ENCODE measurements at regions of chr19 and their contacts with region 1.

Region 1: GRCh38 chr19:20999731-21000352 is 20.6 kb upstream of the ZNF430 start:
- DNase-seq: no peak
- ATAC-seq: peak; percentile 57
- H3K4me3 ChIP-seq: no peak overlapping the region
- H3K27ac ChIP-seq: no peak overlapping the region
- H3K4me1 ChIP-seq: no peaks in the 10 kb centered on the region
- H3K27me3 ChIP-seq: no peaks in the 10 kb centered on the region
- CTCF ChIP-seq: no peak
- EP300 ChIP-seq: no peak
- POLR2A ChIP-seq: no peak
- RAD21 ChIP-seq: no peak

Region 2: GRCh38 chr19:21698215-21698614 is 698.4 kb after region 1 on chr19:
- CTCF ChIA-PET with region 1: no interaction called
- POLR2A ChIA-PET with region 1: no interaction called
- in situ Hi-C with region 1: no loop called
- intact Hi-C with region 1: loop called (anchors 5 kb)
- DNase-seq: peak; percentile 4
- ATAC-seq: peak; percentile 39; the same call in 2 of the 3 replicates
- H3K4me3 ChIP-seq: no peak overlapping the region
- H3K27ac ChIP-seq: no peak overlapping the region
- H3K4me1 ChIP-seq: no peaks in the 10 kb centered on the region
- H3K27me3 ChIP-seq: no peaks in the 10 kb centered on the region
- CTCF ChIP-seq: peak; percentile 44
- EP300 ChIP-seq: no peak
- POLR2A ChIP-seq: no peak
- RAD21 ChIP-seq: no peak

Measured in HepG2 (cell line).